ENCODE measurements at regions of chr2 and their contacts with region 1.

Region 1: DNA sequence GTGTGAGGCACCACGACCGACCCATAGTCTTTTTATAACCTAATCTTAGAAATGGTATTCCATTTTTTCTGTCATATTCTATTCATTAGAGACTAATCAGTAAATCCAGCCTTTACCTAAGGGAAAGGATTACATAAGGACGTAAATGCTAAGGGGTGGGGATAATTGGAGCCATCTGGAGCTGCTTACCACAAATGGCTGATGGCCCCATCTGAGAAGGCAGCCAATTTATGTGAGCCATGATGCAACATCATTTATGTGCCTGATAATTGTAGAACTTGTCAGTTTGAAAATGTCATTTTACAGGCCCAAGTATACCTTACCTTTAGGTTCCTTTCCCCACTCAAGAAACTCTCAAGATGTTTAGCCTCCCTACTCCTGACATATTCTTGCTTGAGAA is 44.0 kb downstream of the ARHGEF33 start:
- DNase-seq: no peak
- ATAC-seq: no peak
- H3K4me3 ChIP-seq: no peak overlapping the region
- H3K27ac ChIP-seq: no peak overlapping the region
- H3K4me1 ChIP-seq: no peaks in the 10 kb centered on the region
- H3K27me3 ChIP-seq: peaks cover 3 to 4% of the 10 kb centered on the region in 2 experiments; a peak in 2 of 5 replicates
- CTCF ChIP-seq: no peak
- EP300 ChIP-seq: no peak
- POLR2A ChIP-seq: no peak
- RAD21 ChIP-seq: no peak

Region 2: GRCh38 chr2:38829971-38830370 is 103.7 kb before region 1 on chr2:
- CTCF ChIA-PET with region 1: no interaction called
- POLR2A ChIA-PET with region 1: no interaction called
- in situ Hi-C with region 1: no loop called
- intact Hi-C with region 1: loop called (anchors 5 kb)
- DNase-seq: no peak
- ATAC-seq: no peak
- H3K4me3 ChIP-seq: no peak overlapping the region
- H3K27ac ChIP-seq: no peak overlapping the region
- H3K4me1 ChIP-seq: peaks cover 0 to 6% of the 10 kb centered on the region in 2 experiments; a peak in 2 of 5 replicates
- H3K27me3 ChIP-seq: no peaks in the 10 kb centered on the region
- CTCF ChIP-seq: no peak
- EP300 ChIP-seq: no peak
- POLR2A ChIP-seq: no peak
- RAD21 ChIP-seq: no peak